Posterior vena cava (tissue), 2 donors: ENCODE measurements at regions of chr7 and their contacts with region 1.

Region 1: DNA sequence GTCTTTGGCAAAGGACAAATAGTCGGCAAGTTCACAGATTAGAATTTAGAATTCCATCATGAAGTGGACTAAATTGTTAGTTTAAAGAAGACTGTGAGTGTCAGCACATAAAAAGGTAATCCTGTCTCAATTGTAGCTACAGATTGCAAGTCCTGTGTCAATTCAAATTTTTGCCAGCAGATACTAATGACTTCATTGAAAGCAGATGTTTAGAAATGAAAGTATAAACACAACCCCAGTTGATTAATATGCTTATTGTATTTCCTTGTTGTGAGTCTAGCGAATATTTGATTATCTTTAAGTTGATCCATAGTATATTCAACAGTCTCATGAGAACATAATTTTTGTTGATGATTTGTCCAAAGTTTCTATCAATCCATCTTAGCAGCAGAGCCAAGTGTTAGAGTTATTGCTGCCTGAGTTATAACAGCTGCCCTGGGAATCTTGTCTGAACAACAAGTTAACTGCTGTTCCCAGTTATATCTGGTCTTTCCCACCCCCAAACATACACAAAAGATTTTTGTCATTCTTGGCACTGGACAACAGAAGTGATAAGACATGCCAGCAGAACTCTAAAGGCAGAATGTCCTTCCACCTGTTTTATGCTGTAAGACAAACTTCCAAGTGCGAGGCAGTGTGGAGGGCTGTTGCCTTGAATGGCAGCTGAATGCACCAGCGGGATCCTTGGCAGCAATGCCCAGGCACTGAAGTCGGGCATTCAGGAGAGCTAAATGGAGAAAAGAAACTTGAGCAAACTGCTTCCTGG is 21.3 kb upstream of the HERPUD2 start:
- DNase-seq: no peak

Region 2: GRCh38 chr7:35647171-35647574 is 69.0 kb before region 1 on chr7:
- intact Hi-C with region 1: no loop called
- DNase-seq: no peak

Region 3: DNA sequence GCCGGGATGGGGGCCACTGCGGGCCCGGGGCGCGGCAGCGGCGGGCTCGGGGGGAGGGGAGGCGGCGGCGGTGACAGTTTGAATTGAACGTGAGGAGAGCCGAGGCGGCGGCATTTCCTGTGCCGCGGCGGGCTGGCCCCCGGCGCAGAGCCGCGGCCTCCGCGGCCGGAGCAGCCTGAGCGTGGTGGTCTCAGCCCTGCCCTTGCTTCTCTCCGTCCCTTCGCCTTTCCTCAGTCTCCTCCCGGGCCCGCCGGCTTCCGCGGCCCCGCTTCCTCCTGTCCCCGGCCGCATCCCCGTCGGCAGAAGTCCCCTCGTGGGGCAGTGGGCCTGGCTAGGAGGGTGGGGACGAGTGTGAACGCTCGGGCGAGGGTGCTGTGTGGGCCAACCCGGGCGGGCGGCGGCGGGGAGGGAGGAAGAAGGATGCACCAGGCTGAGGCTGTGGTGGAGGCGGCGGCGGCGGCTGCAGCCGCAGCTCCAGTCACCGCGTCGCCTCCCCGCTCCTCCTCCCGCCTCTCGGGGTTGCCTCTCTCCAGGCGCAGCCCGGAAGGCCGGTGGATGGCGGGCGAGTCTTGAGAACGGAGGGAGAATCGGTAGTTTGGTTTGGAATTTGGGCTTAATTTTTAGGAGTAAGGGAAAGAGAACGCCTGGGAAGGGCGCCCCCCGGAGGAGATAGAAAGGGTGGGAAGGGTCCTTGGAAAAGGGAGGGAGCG is 85.3 kb after region 1 on chr7:
- intact Hi-C with region 1: loop called in 1 of 2 experiments (anchors 10 kb)
- DNase-seq: peak; percentile 91

Region 4: GRCh38 chr7:35906191-35906908 is 190.1 kb after region 1 on chr7:
- intact Hi-C with region 1: loop called (anchors 5 kb)
- DNase-seq: no peak

Region 5: DNA sequence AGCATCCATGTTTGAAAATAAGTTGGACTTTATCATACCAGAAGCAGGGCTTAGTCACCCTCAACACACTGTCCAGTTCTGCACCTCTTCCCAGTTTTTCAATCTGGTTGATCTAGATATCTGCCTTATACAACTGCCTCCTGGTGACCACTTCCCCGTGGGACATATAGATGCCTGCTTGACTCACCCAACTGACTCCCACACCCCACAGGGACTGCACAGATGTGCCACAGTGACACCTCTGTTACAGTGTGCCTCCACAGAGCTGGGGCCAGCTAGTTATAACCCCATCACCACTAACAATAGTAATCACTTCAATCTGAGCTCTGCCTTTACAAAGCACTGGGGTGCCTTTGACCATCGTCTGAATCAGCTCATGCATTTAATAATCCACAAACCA is 1090.7 kb after region 1 on chr7:
- intact Hi-C with region 1: no loop called
- DNase-seq: no peak